WTC11 (cell line): ENCODE measurements at regions of chr22 and their contacts with region 1.

Region 1: GRCh38 chr22:36368359-36368983 is 19.3 kb downstream of the MYH9 start:
- DNase-seq: peak; percentile 73
- ATAC-seq: peak; percentile 84
- H3K4me3 Mint-ChIP-seq: peak overlapping the region; percentile 22; the same call in 1 of the 2 replicates
- H3K27ac Mint-ChIP-seq: peak overlapping the region; percentile 100
- H3K4me1 Mint-ChIP-seq: peaks cover 96% of the 10 kb centered on the region
- H3K27me3 Mint-ChIP-seq: no peaks in the 10 kb centered on the region
- CTCF ChIP-seq: no peak

Region 2: GRCh38 chr22:36379593-36380361 is 11.3 kb after region 1 on chr22:
- CTCF ChIA-PET with region 1: interaction called, 5 read pairs
- POLR2A ChIA-PET with region 1: interaction called, 66 read pairs
- DNase-seq: no peak
- ATAC-seq: peak; percentile 67
- H3K4me3 Mint-ChIP-seq: no peak overlapping the region
- H3K27ac Mint-ChIP-seq: peak overlapping the region; percentile 57
- H3K4me1 Mint-ChIP-seq: peaks cover 68% of the 10 kb centered on the region
- H3K27me3 Mint-ChIP-seq: no peaks in the 10 kb centered on the region
- CTCF ChIP-seq: no peak

Region 3: GRCh38 chr22:36435516-36436415 is 67.3 kb after region 1 on chr22:
- CTCF ChIA-PET with region 1: no interaction called
- POLR2A ChIA-PET with region 1: no interaction called
- DNase-seq: peak; percentile 58
- ATAC-seq: peak; percentile 78
- H3K4me3 Mint-ChIP-seq: 0 out of 2 replicates have a peak overlapping the region, but pooled peaks have one; percentile 5
- H3K27ac Mint-ChIP-seq: peak overlapping the region; percentile 80
- H3K4me1 Mint-ChIP-seq: peaks cover 43% of the 10 kb centered on the region
- H3K27me3 Mint-ChIP-seq: no peaks in the 10 kb centered on the region
- CTCF ChIP-seq: no peak